ENCODE measurements at regions of chr19 and their contacts with region 1.

Region 1: DNA sequence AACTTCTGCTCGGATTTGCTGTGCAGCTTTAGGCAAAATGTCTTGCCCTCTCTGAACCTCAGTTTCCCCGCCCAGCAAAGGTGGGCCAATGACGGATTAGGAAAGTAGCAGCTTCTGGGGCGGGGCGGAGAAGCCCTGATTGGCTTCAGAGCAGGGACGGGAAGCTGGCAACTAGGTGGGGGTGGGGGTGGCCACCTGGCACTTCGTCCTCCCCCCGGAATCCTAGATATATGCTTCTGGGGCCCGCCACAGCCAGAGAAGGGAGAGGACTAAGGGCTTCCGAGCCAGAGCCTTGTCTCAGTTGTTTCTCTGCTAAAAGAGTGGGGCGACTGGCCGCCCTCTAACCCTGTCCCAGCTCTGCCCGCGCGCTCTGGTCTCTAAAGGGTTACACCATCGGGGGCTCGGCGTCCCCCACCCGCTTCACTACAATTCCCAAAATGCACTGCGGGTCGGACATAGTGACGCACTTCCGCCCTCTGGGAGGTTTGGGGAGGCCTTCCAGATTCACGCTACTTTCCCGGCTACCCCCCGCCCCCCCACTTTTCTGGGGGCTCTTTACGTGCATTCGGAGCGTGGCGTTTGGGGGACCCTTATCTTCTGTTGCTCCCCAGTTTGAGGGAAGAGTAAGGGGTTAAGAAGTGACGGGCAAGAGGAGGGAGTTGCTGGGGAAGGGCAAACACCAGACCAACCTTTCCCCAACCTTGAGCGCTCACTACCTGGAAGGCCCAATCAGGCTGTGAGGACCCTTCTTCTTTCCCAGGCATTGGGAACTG is 672 bp upstream of the IRF2BP1 start:
- DNase-seq: peak; percentile 88
- H3K4me3 Mint-ChIP-seq: peak overlapping the region; percentile 88
- H3K27ac Mint-ChIP-seq: peak overlapping the region; percentile 95
- H3K4me1 Mint-ChIP-seq: peaks cover 13% of the 10 kb centered on the region
- H3K27me3 Mint-ChIP-seq: peaks cover 1% of the 10 kb centered on the region

Region 2: GRCh38 chr19:45730389-45731288 is 156.0 kb before region 1 on chr19 and contains the start of gene FBXO46:
- intact Hi-C with region 1: loop called (anchors 1 kb)
- DNase-seq: peak; percentile 95
- H3K4me3 Mint-ChIP-seq: peak within 1 kb of the TSS; percentile 99
- H3K27ac Mint-ChIP-seq: peak within 1 kb of the TSS; percentile 85
- H3K4me1 Mint-ChIP-seq: peaks cover 26% of the 10 kb centered on the region
- H3K27me3 Mint-ChIP-seq: peaks cover 2% of the 10 kb centered on the region
- total RNA-seq, gene FBXO46: 35.1 and 35.4 TPM in 2 replicates

Region 3: DNA sequence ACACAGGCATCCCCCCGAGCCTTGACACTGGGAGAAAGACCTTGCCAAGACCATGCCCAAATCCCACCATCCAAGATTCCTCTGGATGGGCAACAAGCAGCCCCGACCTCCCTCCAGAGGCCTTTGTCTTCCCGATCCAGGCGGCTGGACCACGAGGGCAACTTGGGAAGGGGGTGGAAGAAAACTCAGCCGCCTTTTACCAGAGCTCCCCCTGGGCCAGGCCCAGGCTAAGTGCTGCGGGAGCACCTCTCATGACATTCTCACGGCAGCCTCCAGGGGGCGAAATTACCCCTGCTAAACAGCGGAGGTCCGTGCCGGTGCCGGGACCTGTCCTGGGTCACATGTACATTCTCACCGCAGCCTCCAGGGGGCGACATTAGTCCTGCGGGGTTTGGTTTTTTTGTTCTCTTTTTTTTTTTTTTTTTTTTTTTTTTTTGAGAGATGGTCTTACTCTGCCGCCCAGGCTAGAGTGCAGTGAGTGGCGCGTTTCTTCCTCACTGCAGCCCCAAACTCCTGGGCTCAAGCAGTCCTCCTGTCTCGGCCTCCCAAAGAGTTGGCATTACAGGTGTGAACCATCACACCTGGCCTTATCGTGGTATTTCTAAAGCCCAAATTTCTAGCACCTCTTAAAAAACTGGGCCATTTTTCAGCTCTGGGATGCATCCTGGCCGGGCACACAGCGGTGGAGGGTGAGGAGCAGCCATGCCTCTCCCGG is 69.4 kb before region 1 on chr19:
- intact Hi-C with region 1: loop called (anchors 1 kb)
- DNase-seq: peak; percentile 89
- H3K4me3 Mint-ChIP-seq: no peak overlapping the region
- H3K27ac Mint-ChIP-seq: no peak overlapping the region
- H3K4me1 Mint-ChIP-seq: no peaks in the 10 kb centered on the region
- H3K27me3 Mint-ChIP-seq: no peaks in the 10 kb centered on the region

Region 4: GRCh38 chr19:45876411-45877197 is 10.0 kb before region 1 on chr19:
- intact Hi-C with region 1: no loop called
- DNase-seq: no peak
- H3K4me3 Mint-ChIP-seq: no peak overlapping the region
- H3K27ac Mint-ChIP-seq: peak overlapping the region; percentile 68
- H3K4me1 Mint-ChIP-seq: peaks cover 23% of the 10 kb centered on the region
- H3K27me3 Mint-ChIP-seq: peaks cover 12% of the 10 kb centered on the region

Region 5: GRCh38 chr19:45927565-45928261 is 41.1 kb after region 1 on chr19:
- intact Hi-C with region 1: loop called (anchors 1 kb)
- DNase-seq: peak; percentile 86
- H3K4me3 Mint-ChIP-seq: peak overlapping the region; percentile 78
- H3K27ac Mint-ChIP-seq: no peak overlapping the region
- H3K4me1 Mint-ChIP-seq: peaks cover 19% of the 10 kb centered on the region
- H3K27me3 Mint-ChIP-seq: peaks cover 15% of the 10 kb centered on the region

Region 6: GRCh38 chr19:46006411-46006810 is 119.8 kb after region 1 on chr19:
- intact Hi-C with region 1: no loop called
- DNase-seq: no peak
- H3K4me3 Mint-ChIP-seq: no peak overlapping the region
- H3K27ac Mint-ChIP-seq: no peak overlapping the region
- H3K4me1 Mint-ChIP-seq: peaks cover under 1% of the 10 kb centered on the region
- H3K27me3 Mint-ChIP-seq: no peaks in the 10 kb centered on the region

Region 7: GRCh38 chr19:46346821-46347571 is 460.4 kb after region 1 on chr19 and contains the start of gene PPP5C:
- intact Hi-C with region 1: loop called (anchors 10 kb)
- DNase-seq: peak; percentile 86
- H3K4me3 Mint-ChIP-seq: peak within 1 kb of the TSS; percentile 94
- H3K27ac Mint-ChIP-seq: peak within 1 kb of the TSS; percentile 93
- H3K4me1 Mint-ChIP-seq: peaks cover 48% of the 10 kb centered on the region
- H3K27me3 Mint-ChIP-seq: peaks cover 17% of the 10 kb centered on the region
- total RNA-seq, gene PPP5C: 160 and 173 TPM in 2 replicates